PC-9 (cell line): ENCODE measurements at regions of chr13 and their contacts with region 1.

Region 1: GRCh38 chr13:29008296-29008695 is 188.2 kb downstream of the MTUS2 start:
- DNase-seq: no peak
- H3K4me3 ChIP-seq: no peak overlapping the region
- H3K27ac ChIP-seq: no peak overlapping the region
- H3K4me1 ChIP-seq: no peaks in the 10 kb centered on the region
- H3K27me3 ChIP-seq: peaks cover 28% of the 10 kb centered on the region
- CTCF ChIP-seq: no peak

Region 2: DNA sequence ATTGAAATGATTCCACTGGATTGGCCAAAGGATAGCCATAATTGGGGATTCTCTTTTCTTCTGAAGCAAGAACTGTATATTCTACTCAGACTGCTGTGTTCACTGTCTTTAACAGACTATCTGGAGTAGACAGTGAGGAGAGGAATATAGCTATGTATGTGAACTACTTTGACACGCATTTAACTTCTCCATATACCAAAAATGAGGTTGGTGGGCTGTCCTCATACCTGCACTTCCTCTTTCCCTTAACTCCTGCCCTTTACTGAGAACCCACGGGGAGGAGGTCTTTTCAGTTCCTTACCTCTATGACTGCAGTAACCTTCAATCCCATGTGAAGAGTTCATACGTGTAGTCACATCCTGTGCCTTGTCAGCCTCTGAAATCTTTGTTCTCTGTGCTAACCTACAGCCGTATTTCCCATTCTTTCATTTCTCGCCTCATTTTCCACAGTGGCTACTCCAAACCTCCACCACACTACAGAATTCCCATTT is 117.7 kb after region 1 on chr13:
- CTCF ChIA-PET with region 1: no interaction called
- POLR2A ChIA-PET with region 1: no interaction called
- intact Hi-C with region 1: no loop called
- DNase-seq: no peak
- H3K4me3 ChIP-seq: no peak overlapping the region
- H3K27ac ChIP-seq: no peak overlapping the region
- H3K4me1 ChIP-seq: no peaks in the 10 kb centered on the region
- H3K27me3 ChIP-seq: peaks cover 47% of the 10 kb centered on the region
- CTCF ChIP-seq: no peak

Region 3: GRCh38 chr13:29411481-29411880 is 403.2 kb after region 1 on chr13:
- CTCF ChIA-PET with region 1: no interaction called
- POLR2A ChIA-PET with region 1: no interaction called
- intact Hi-C with region 1: no loop called
- DNase-seq: no peak
- H3K4me3 ChIP-seq: no peak overlapping the region
- H3K27ac ChIP-seq: no peak overlapping the region
- H3K4me1 ChIP-seq: no peaks in the 10 kb centered on the region
- H3K27me3 ChIP-seq: peaks cover 27% of the 10 kb centered on the region
- CTCF ChIP-seq: no peak

Region 4: GRCh38 chr13:29664591-29664990 is 656.3 kb after region 1 on chr13:
- CTCF ChIA-PET with region 1: interaction called, 10 read pairs
- POLR2A ChIA-PET with region 1: no interaction called
- intact Hi-C with region 1: no loop called
- DNase-seq: no peak
- H3K4me3 ChIP-seq: no peak overlapping the region
- H3K27ac ChIP-seq: no peak overlapping the region
- H3K4me1 ChIP-seq: no peaks in the 10 kb centered on the region
- H3K27me3 ChIP-seq: peaks cover 5% of the 10 kb centered on the region; the same call in 1 of the 2 replicates
- CTCF ChIP-seq: no peak